IMR-90 (cell line): ENCODE measurements at regions of chr2 and their contacts with region 1.

Region 1: DNA sequence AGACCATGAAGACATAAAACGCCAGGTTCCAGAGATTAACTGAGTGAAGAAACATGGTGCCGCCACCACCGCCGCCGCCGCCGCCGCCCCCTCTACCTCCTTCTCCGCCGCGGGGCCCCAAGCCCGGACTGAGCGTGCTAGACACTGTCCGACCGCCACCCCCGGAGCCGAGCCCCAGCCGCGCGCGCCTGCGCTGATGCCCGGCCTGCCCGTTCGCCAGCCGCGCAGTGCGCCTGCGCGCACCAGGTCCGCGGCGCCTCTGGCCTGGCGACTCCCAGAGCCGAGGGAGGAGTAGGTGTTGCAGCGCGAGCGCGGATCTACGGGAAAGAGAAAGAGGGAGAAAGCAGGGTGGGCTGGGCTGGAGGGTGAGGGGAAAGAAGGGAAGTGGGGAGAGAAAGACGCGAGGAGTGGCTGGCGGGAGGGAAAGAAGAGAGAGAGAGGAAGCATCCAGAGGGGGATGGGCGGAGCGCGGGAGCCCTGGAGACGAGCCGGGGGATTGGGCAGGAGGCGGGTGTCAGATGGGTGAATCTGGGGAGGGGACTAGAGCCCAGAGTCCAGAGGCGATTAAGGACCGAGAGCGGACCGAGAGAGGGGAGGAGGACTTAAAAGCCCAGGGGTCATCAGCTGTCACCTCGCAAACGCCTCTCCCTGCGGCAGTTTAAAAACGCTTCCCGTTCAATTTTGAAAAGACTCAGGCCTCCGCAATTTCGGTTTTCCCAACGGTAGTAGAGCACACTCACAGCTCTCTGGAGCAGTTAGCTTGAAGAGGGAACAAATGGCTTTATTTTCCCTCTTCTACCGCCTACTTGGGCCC is at the start of gene PGAP1:
- DNase-seq: peak; percentile 88
- ATAC-seq: peak; percentile 91
- H3K4me3 ChIP-seq: peak within 1 kb of the TSS; percentile 80
- H3K27ac ChIP-seq: peak within 1 kb of the TSS; percentile 92
- H3K4me1 ChIP-seq: no peaks in the 10 kb centered on the region; the same call in 1 of the 2 replicates
- H3K27me3 ChIP-seq: no peaks in the 10 kb centered on the region; the same call in 1 of the 2 replicates
- CTCF ChIP-seq: no peak
- POLR2A ChIP-seq: peak; percentile 74
- RAD21 ChIP-seq: no peak; the same call in 1 of the 2 replicates
- total RNA-seq, gene PGAP1: 5.7 and 6.7 TPM in 2 replicates

Region 2: GRCh38 chr2:196314780-196315179 is 612.0 kb before region 1 on chr2:
- CTCF ChIA-PET with region 1: no interaction called
- POLR2A ChIA-PET with region 1: no interaction called
- dilution Hi-C with region 1: no loop called
- in situ Hi-C with region 1: no loop called
- intact Hi-C with region 1: loop called (anchors 10 kb)
- DNase-seq: no peak
- ATAC-seq: peak; percentile 54
- H3K4me3 ChIP-seq: no peak overlapping the region
- H3K27ac ChIP-seq: no peak overlapping the region; the same call in 1 of the 2 replicates
- H3K4me1 ChIP-seq: peaks cover 9% of the 10 kb centered on the region
- H3K27me3 ChIP-seq: no peaks in the 10 kb centered on the region
- CTCF ChIP-seq: no peak
- POLR2A ChIP-seq: no peak
- RAD21 ChIP-seq: no peak

Region 3: DNA sequence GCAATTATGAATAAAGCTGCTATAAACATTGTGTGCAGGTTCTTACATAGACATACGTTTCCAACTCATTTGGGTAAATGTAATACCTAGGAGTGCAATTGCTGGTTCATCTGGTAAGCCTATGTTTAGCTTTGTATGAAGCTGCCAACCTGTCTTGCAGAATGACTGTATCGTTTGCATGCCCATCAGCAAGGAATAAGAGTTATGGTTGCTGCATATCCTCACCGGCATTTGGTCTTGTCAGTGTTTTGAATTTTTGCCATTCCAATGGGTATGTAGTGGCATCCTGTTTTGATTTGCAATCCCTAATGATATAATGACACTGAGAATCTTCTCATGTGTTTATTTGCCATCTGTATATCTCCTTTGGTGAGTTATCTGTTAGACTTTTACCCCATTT is 266.5 kb before region 1 on chr2:
- CTCF ChIA-PET with region 1: no interaction called
- POLR2A ChIA-PET with region 1: no interaction called
- dilution Hi-C with region 1: no loop called
- in situ Hi-C with region 1: no loop called
- intact Hi-C with region 1: no loop called
- DNase-seq: peak; percentile 63
- ATAC-seq: peak; percentile 82
- H3K4me3 ChIP-seq: no peak overlapping the region
- H3K27ac ChIP-seq: no peak overlapping the region
- H3K4me1 ChIP-seq: no peaks in the 10 kb centered on the region; the same call in 1 of the 2 replicates
- H3K27me3 ChIP-seq: no peaks in the 10 kb centered on the region
- CTCF ChIP-seq: no peak
- POLR2A ChIP-seq: no peak
- RAD21 ChIP-seq: no peak

Region 4: GRCh38 chr2:196798980-196799379 is 127.8 kb before region 1 on chr2:
- CTCF ChIA-PET with region 1: no interaction called
- POLR2A ChIA-PET with region 1: no interaction called
- dilution Hi-C with region 1: no loop called
- in situ Hi-C with region 1: no loop called
- intact Hi-C with region 1: loop called (anchors 1 kb)
- DNase-seq: no peak
- ATAC-seq: peak; percentile 8; the same call in 1 of the 2 replicates
- H3K4me3 ChIP-seq: peak overlapping the region; percentile 95
- H3K27ac ChIP-seq: peak overlapping the region; percentile 77
- H3K4me1 ChIP-seq: no peaks in the 10 kb centered on the region
- H3K27me3 ChIP-seq: no peaks in the 10 kb centered on the region
- CTCF ChIP-seq: no peak
- POLR2A ChIP-seq: no peak
- RAD21 ChIP-seq: no peak

Region 5: DNA sequence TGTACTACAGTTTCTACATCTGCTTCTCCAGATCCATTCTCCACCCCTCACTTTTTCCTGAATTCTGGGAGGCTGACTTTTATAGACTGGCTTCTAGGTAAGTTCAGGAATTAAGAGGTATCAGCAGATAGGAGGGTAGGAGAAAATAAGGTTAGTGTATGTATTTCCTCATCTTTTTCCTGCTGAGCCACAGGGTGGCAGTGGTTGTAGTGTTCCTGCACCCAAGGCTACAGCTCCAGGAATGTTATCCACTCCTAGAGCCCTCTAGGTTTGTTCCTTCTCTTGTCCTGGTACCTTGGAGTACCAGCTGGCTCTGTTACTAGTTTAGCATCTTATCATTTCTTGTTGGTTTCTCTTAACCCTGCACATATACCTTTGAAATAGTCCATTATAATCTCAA is 76.9 kb before region 1 on chr2:
- CTCF ChIA-PET with region 1: interaction called, 3 read pairs
- POLR2A ChIA-PET with region 1: no interaction called
- dilution Hi-C with region 1: no loop called
- in situ Hi-C with region 1: no loop called
- intact Hi-C with region 1: loop called (anchors 5 kb)
- DNase-seq: peak; percentile 45
- ATAC-seq: peak; percentile 89
- H3K4me3 ChIP-seq: no peak overlapping the region
- H3K27ac ChIP-seq: no peak overlapping the region
- H3K4me1 ChIP-seq: no peaks in the 10 kb centered on the region
- H3K27me3 ChIP-seq: no peaks in the 10 kb centered on the region
- CTCF ChIP-seq: peak; percentile 48
- POLR2A ChIP-seq: no peak
- RAD21 ChIP-seq: peak; percentile 58

Region 6: DNA sequence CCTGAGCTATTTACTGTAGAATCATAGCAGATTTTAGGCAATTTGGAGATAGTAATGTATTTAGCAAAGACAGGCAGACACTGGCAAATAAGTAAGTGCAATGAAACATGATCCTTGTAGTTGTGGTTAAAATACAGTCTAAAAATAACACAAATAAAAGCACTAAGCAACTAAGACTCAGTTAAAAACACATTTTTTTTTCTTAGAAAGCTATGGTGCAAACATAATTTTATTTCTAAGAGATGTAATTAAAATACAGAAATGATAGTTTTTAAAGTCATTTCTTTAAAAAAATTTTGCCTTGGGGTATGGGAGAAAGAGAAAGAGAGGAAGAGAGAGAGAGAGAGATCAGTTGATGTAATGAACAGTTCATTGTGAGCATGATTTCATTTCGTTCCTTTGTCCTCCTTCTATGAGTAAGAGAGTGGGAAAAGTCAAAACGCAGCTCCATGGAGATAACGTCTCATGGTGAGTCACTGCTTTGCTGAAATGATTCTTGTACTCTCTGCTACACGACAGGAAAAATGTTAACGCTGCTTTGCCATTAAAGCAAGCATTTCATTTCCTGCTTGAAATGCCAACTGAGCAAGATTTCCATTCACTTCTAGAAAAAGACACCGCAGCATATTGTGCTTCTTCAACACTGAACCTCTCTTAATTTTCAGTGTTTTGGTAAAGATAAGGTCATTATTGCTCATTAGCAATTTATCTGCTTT is 61.0 kb after region 1 on chr2:
- CTCF ChIA-PET with region 1: no interaction called
- POLR2A ChIA-PET with region 1: no interaction called
- dilution Hi-C with region 1: no loop called
- in situ Hi-C with region 1: no loop called
- intact Hi-C with region 1: loop called (anchors 5 kb)
- DNase-seq: peak; percentile 98
- ATAC-seq: peak; percentile 99
- H3K4me3 ChIP-seq: peak overlapping the region; percentile 16; the same call in 1 of the 2 replicates
- H3K27ac ChIP-seq: no peak overlapping the region; the same call in 1 of the 2 replicates
- H3K4me1 ChIP-seq: peaks cover 4% of the 10 kb centered on the region; the same call in 1 of the 2 replicates
- H3K27me3 ChIP-seq: no peaks in the 10 kb centered on the region
- CTCF ChIP-seq: no peak
- POLR2A ChIP-seq: no peak
- RAD21 ChIP-seq: no peak

Region 7: DNA sequence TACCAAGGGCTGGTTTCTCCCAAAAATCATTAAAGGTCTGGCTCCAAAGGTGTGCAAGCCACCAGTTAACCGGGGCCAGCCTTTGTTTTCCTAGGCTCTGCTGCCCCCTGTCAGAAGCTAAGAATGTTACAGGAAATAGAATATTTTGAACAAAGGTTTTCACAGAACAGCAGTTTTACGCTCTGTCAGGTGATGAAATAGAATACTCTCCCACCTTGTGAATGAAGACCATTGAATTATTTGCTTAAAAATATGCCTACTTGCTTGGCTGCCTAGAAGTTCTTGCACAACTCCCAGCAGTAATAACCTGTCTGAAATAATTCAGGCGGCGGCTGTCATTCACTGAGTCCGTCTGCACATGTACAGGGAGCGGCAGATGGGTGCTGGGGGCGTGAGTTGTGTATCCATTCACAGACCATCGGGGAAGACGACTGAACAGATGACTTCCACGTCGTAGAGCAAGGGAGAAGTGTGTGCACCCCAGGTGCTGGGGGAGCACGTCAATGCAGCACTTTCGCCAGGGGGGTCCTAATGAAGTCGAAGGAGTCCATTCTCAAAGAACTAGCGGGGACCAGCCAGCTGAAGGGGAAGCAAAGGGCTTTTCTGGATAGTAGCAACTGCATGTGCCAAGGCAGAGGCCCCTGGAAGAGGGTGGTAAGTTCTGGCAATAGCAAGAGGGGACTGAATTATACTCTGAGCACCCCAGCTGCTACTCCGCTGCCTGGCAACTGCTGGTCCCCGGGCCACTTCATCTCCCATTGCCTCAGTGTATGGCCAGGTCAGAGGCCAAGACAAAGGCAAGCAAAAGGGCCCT is 451.9 kb after region 1 on chr2:
- CTCF ChIA-PET with region 1: no interaction called
- POLR2A ChIA-PET with region 1: no interaction called
- dilution Hi-C with region 1: no loop called
- in situ Hi-C with region 1: no loop called
- intact Hi-C with region 1: loop called (anchors 10 kb)
- DNase-seq: peak; percentile 44
- ATAC-seq: peak; percentile 77
- H3K4me3 ChIP-seq: no peak overlapping the region
- H3K27ac ChIP-seq: no peak overlapping the region
- H3K4me1 ChIP-seq: peaks cover 5% of the 10 kb centered on the region
- H3K27me3 ChIP-seq: no peaks in the 10 kb centered on the region; the same call in 1 of the 2 replicates
- CTCF ChIP-seq: peak; percentile 81
- POLR2A ChIP-seq: no peak
- RAD21 ChIP-seq: peak; percentile 94